HCT116 (cell line): ENCODE measurements at regions of chr6 and their contacts with region 1.

Region 1: DNA sequence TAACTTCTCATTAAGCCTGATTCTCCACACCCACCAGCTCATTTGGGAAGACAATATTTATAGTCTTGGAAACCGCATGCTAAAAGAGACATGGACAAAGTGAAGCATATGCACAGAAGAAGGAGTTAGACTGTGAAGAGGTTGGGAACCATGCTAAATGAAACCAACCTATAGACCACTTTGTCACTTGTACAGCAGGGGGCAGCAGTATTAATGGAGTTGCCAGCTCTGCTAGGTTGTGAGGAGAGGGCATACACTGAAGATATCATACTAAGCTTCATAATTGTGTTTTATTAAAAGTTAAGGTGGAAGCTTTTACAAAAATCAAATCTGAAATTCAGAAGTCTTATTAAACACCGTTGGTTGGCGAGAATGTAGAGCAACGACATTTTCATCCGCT is 38.3 kb upstream of the HMGCLL1 start:
- DNase-seq: peak; percentile 27
- ATAC-seq: peak; percentile 84
- H3K4me3 ChIP-seq: no peak overlapping the region
- H3K27ac ChIP-seq: no peak overlapping the region
- H3K4me1 ChIP-seq: no peaks in the 10 kb centered on the region
- H3K27me3 ChIP-seq: no peaks in the 10 kb centered on the region
- CTCF ChIP-seq: peak; percentile 23 to 67 (median 60); a peak in 5 of 6 replicates
- POLR2A ChIP-seq: no peak
- RAD21 ChIP-seq: peak; percentile 50

Region 2: GRCh38 chr6:55604021-55604420 is 13.3 kb before region 1 on chr6:
- CTCF ChIA-PET with region 1: interaction called, 16 read pairs
- POLR2A ChIA-PET with region 1: no interaction called
- RAD21 ChIA-PET with region 1: no interaction called
- intact Hi-C with region 1: no loop called
- DNase-seq: no peak
- ATAC-seq: no peak
- H3K4me3 ChIP-seq: no peak overlapping the region
- H3K27ac ChIP-seq: no peak overlapping the region
- H3K4me1 ChIP-seq: no peaks in the 10 kb centered on the region
- H3K27me3 ChIP-seq: peaks cover 30% of the 10 kb centered on the region
- CTCF ChIP-seq: no peak
- POLR2A ChIP-seq: no peak
- RAD21 ChIP-seq: no peak

Region 3: GRCh38 chr6:55886185-55886836 is 269.0 kb after region 1 on chr6:
- CTCF ChIA-PET with region 1: interaction called, 5 read pairs
- POLR2A ChIA-PET with region 1: no interaction called
- RAD21 ChIA-PET with region 1: no interaction called
- intact Hi-C with region 1: loop called (anchors 5 kb)
- DNase-seq: peak; percentile 3
- ATAC-seq: no peak
- H3K4me3 ChIP-seq: no peak overlapping the region
- H3K27ac ChIP-seq: no peak overlapping the region
- H3K4me1 ChIP-seq: no peaks in the 10 kb centered on the region
- H3K27me3 ChIP-seq: 0 out of 2 replicates have a peak, but pooled peaks cover 16% of the 10 kb centered on the region
- CTCF ChIP-seq: peak; percentile 23 to 47 (median 44); a peak in 3 of 6 replicates
- POLR2A ChIP-seq: no peak
- RAD21 ChIP-seq: peak; percentile 57

Region 4: GRCh38 chr6:55953335-55953734 is 336.1 kb after region 1 on chr6:
- CTCF ChIA-PET with region 1: no interaction called
- POLR2A ChIA-PET with region 1: no interaction called
- RAD21 ChIA-PET with region 1: no interaction called
- intact Hi-C with region 1: loop called (anchors 5 kb)
- DNase-seq: peak; percentile 15
- ATAC-seq: peak; percentile 47; the same call in 1 of the 2 replicates
- H3K4me3 ChIP-seq: no peak overlapping the region
- H3K27ac ChIP-seq: no peak overlapping the region
- H3K4me1 ChIP-seq: no peaks in the 10 kb centered on the region
- H3K27me3 ChIP-seq: no peaks in the 10 kb centered on the region
- CTCF ChIP-seq: peak; percentile 13 to 42 (median 35); a peak in 4 of 6 replicates
- POLR2A ChIP-seq: no peak
- RAD21 ChIP-seq: peak; percentile 69

Region 5: DNA sequence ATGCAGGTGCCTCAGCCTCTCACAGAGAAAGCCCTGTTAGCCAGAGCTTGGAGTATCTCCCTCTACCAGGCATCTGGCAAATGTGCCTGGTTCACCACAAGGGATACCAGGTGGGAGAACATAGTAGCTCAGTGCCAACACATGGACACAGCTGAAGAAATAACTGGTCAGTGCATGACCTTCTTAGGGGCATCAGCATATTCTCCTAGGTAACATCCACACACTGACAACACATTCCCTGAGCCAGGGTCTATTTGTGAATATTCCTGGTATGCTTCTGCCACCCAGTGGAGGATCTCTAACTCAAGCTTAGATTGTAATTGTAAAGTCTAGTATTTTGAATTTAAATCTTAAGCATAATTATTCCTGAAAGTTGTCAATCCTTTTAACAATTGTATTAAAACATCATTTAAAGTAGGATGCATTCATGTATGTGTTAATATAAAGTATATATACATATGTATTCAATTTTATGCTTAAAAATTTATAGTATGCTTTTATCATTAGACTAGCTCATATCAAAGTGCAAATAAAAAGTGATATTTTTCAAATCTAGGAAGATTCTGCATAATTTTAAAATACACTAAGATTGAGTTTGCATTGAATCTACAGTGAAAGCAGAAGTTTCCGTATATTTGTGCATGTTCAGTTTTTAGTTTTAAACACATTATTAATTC is 675.4 kb after region 1 on chr6:
- CTCF ChIA-PET with region 1: no interaction called
- POLR2A ChIA-PET with region 1: no interaction called
- RAD21 ChIA-PET with region 1: no interaction called
- intact Hi-C with region 1: loop called (anchors 5 kb)
- DNase-seq: peak; percentile 53
- ATAC-seq: peak; percentile 86
- H3K4me3 ChIP-seq: no peak overlapping the region
- H3K27ac ChIP-seq: no peak overlapping the region
- H3K4me1 ChIP-seq: peaks cover 0 to 5% of the 10 kb centered on the region in 2 experiments; a peak in 2 of 4 replicates
- H3K27me3 ChIP-seq: no peaks in the 10 kb centered on the region
- CTCF ChIP-seq: peak; percentile 50 to 80 (median 74); a peak in 5 of 6 replicates
- POLR2A ChIP-seq: no peak
- RAD21 ChIP-seq: peak; percentile 91